CD8-positive, alpha-beta T cell (primary cell): ENCODE measurements at regions of chr3 and their contacts with region 1.

Region 1: GRCh38 chr3:111539351-111540331 is 2.4 kb upstream of the CD96 start:
- DNase-seq: peak; percentile 19 to 84 (median 70)
- ATAC-seq: peak; percentile 34
- H3K4me3 ChIP-seq: peak overlapping the region; percentile 22 to 34
- H3K4me3 Mint-ChIP-seq: peak overlapping the region; percentile 77
- H3K27ac ChIP-seq: peak overlapping the region; percentile 22 to 57
- H3K27ac Mint-ChIP-seq: peak overlapping the region; percentile 93
- H3K4me1 ChIP-seq: peaks cover 41% of the 10 kb centered on the region
- H3K4me1 Mint-ChIP-seq: peaks cover 69% of the 10 kb centered on the region
- H3K27me3 ChIP-seq: no peaks in the 10 kb centered on the region
- H3K27me3 Mint-ChIP-seq: no peaks in the 10 kb centered on the region
- CTCF ChIP-seq: peak; percentile 96

Region 2: GRCh38 chr3:109731620-109732473 is 1807.8 kb before region 1 on chr3:
- CTCF ChIA-PET with region 1: interaction called, 5 read pairs
- POLR2A ChIA-PET with region 1: no interaction called
- intact Hi-C with region 1: loop called (anchors 1 to 5 kb)
- DNase-seq: peak; percentile 16 to 77 (median 62)
- ATAC-seq: peak; percentile 91
- H3K4me3 ChIP-seq: no peak overlapping the region
- H3K4me3 Mint-ChIP-seq: no peak overlapping the region
- H3K27ac ChIP-seq: no peak overlapping the region
- H3K27ac Mint-ChIP-seq: no peak overlapping the region
- H3K4me1 ChIP-seq: peaks cover 6% of the 10 kb centered on the region
- H3K4me1 Mint-ChIP-seq: peaks cover 7% of the 10 kb centered on the region
- H3K27me3 ChIP-seq: no peaks in the 10 kb centered on the region
- H3K27me3 Mint-ChIP-seq: no peaks in the 10 kb centered on the region
- CTCF ChIP-seq: peak; percentile 100

Region 3: GRCh38 chr3:110314512-110315114 is 1225.0 kb before region 1 on chr3:
- CTCF ChIA-PET with region 1: interaction called, 4 read pairs
- POLR2A ChIA-PET with region 1: no interaction called
- intact Hi-C with region 1: loop called (anchors 1 to 10 kb)
- DNase-seq: peak; percentile 1 to 72 (median 55)
- ATAC-seq: peak; percentile 70
- H3K4me3 ChIP-seq: no peak overlapping the region
- H3K4me3 Mint-ChIP-seq: no peak overlapping the region
- H3K27ac ChIP-seq: no peak overlapping the region
- H3K27ac Mint-ChIP-seq: no peak overlapping the region
- H3K4me1 ChIP-seq: no peaks in the 10 kb centered on the region
- H3K4me1 Mint-ChIP-seq: peaks cover 2% of the 10 kb centered on the region
- H3K27me3 ChIP-seq: no peaks in the 10 kb centered on the region
- H3K27me3 Mint-ChIP-seq: peaks cover 4% of the 10 kb centered on the region
- CTCF ChIP-seq: peak; percentile 82

Region 4: DNA sequence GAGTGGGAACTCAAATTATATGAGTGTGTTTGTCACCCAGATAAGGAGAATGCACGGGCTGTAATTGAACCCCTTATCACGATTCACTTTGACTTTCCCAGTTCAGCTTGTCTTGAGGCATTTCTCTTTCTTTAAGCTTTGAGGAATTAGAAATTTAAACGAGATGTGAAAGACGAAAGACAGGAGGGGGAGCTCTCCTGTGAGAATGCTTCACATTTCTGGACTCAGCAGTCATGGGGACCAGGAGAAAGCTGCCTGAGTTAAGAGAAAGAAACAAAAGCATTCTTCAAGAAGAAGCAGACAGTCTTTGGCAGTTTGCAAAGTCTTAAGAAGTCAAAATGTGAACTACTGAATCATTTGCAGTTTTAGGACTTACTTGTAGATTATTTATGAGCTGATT is 262.4 kb before region 1 on chr3:
- CTCF ChIA-PET with region 1: no interaction called
- POLR2A ChIA-PET with region 1: no interaction called
- intact Hi-C with region 1: loop called in 1 of 2 experiments (anchors 2 kb)
- DNase-seq: peak in 2 of 9 experiments; percentile 9 to 17
- ATAC-seq: no peak
- H3K4me3 ChIP-seq: no peak overlapping the region
- H3K4me3 Mint-ChIP-seq: no peak overlapping the region
- H3K27ac ChIP-seq: no peak overlapping the region
- H3K27ac Mint-ChIP-seq: no peak overlapping the region
- H3K4me1 ChIP-seq: peaks cover 4% of the 10 kb centered on the region
- H3K4me1 Mint-ChIP-seq: peaks cover 19% of the 10 kb centered on the region
- H3K27me3 ChIP-seq: no peaks in the 10 kb centered on the region
- H3K27me3 Mint-ChIP-seq: no peaks in the 10 kb centered on the region
- CTCF ChIP-seq: no peak

Region 5: DNA sequence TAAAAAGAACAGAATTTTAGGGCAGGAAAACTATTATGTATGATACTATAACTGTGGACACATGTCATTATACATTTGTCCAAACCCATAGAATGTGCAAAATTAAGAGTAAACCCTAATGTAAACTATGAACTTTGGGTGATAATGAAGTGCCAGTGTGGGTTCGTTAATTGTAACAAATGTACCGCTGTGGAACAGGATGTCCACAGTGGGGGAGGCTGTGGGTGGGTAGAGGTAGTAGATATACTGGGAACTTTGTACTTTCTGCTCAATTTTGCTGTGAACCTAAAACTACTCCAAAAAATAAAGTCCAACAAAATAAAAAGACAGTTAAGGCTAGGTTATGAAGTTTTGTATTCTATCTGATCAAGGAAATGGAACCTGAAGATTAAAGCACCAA is 27.2 kb after region 1 on chr3:
- CTCF ChIA-PET with region 1: no interaction called
- POLR2A ChIA-PET with region 1: no interaction called
- intact Hi-C with region 1: no loop called
- DNase-seq: peak in 1 of 9 experiments; percentile 35
- ATAC-seq: no peak
- H3K4me3 ChIP-seq: no peak overlapping the region
- H3K4me3 Mint-ChIP-seq: no peak overlapping the region
- H3K27ac ChIP-seq: no peak overlapping the region
- H3K27ac Mint-ChIP-seq: peak overlapping the region; percentile 65
- H3K4me1 ChIP-seq: peaks cover 42% of the 10 kb centered on the region
- H3K4me1 Mint-ChIP-seq: peaks cover 81% of the 10 kb centered on the region
- H3K27me3 ChIP-seq: no peaks in the 10 kb centered on the region
- H3K27me3 Mint-ChIP-seq: no peaks in the 10 kb centered on the region
- CTCF ChIP-seq: no peak

Region 6: GRCh38 chr3:111577794-111578685 is 38.4 kb after region 1 on chr3:
- CTCF ChIA-PET with region 1: no interaction called
- POLR2A ChIA-PET with region 1: no interaction called
- intact Hi-C with region 1: loop called (anchors 5 kb)
- DNase-seq: peak in 2 of 9 experiments; percentile 51 to 68
- ATAC-seq: peak; percentile 90
- H3K4me3 ChIP-seq: no peak overlapping the region
- H3K4me3 Mint-ChIP-seq: no peak overlapping the region
- H3K27ac ChIP-seq: no peak overlapping the region
- H3K27ac Mint-ChIP-seq: peak overlapping the region; percentile 53
- H3K4me1 ChIP-seq: peaks cover 7% of the 10 kb centered on the region
- H3K4me1 Mint-ChIP-seq: peaks cover 75% of the 10 kb centered on the region
- H3K27me3 ChIP-seq: no peaks in the 10 kb centered on the region
- H3K27me3 Mint-ChIP-seq: no peaks in the 10 kb centered on the region
- CTCF ChIP-seq: no peak

Region 7: GRCh38 chr3:111616417-111617105 is 76.9 kb after region 1 on chr3:
- CTCF ChIA-PET with region 1: interaction called, 6 read pairs
- POLR2A ChIA-PET with region 1: interaction called, 6 read pairs
- intact Hi-C with region 1: loop called (anchors 1 to 2 kb)
- DNase-seq: peak; percentile 24 to 91 (median 63)
- ATAC-seq: peak; percentile 93
- H3K4me3 ChIP-seq: no peak overlapping the region
- H3K4me3 Mint-ChIP-seq: peak overlapping the region; percentile 24
- H3K27ac ChIP-seq: peak overlapping the region; percentile 42 to 79
- H3K27ac Mint-ChIP-seq: peak overlapping the region; percentile 95
- H3K4me1 ChIP-seq: peaks cover 38% of the 10 kb centered on the region
- H3K4me1 Mint-ChIP-seq: peaks cover 55% of the 10 kb centered on the region
- H3K27me3 ChIP-seq: no peaks in the 10 kb centered on the region
- H3K27me3 Mint-ChIP-seq: no peaks in the 10 kb centered on the region
- CTCF ChIP-seq: peak; percentile 60

Region 8: GRCh38 chr3:111695636-111696117 is 156.0 kb after region 1 on chr3:
- CTCF ChIA-PET with region 1: no interaction called
- POLR2A ChIA-PET with region 1: no interaction called
- intact Hi-C with region 1: no loop called
- DNase-seq: peak in 2 of 9 experiments; percentile 37 to 50
- ATAC-seq: peak; percentile 45
- H3K4me3 ChIP-seq: no peak overlapping the region
- H3K4me3 Mint-ChIP-seq: no peak overlapping the region
- H3K27ac ChIP-seq: peak overlapping the region in 1 of 2 experiments; percentile 9
- H3K27ac Mint-ChIP-seq: no peak overlapping the region
- H3K4me1 ChIP-seq: no peaks in the 10 kb centered on the region
- H3K4me1 Mint-ChIP-seq: peaks cover 48% of the 10 kb centered on the region
- H3K27me3 ChIP-seq: no peaks in the 10 kb centered on the region
- H3K27me3 Mint-ChIP-seq: no peaks in the 10 kb centered on the region
- CTCF ChIP-seq: no peak